BJ (cell line): ENCODE measurements at regions of chr5 and their contacts with region 1.

Region 1: DNA sequence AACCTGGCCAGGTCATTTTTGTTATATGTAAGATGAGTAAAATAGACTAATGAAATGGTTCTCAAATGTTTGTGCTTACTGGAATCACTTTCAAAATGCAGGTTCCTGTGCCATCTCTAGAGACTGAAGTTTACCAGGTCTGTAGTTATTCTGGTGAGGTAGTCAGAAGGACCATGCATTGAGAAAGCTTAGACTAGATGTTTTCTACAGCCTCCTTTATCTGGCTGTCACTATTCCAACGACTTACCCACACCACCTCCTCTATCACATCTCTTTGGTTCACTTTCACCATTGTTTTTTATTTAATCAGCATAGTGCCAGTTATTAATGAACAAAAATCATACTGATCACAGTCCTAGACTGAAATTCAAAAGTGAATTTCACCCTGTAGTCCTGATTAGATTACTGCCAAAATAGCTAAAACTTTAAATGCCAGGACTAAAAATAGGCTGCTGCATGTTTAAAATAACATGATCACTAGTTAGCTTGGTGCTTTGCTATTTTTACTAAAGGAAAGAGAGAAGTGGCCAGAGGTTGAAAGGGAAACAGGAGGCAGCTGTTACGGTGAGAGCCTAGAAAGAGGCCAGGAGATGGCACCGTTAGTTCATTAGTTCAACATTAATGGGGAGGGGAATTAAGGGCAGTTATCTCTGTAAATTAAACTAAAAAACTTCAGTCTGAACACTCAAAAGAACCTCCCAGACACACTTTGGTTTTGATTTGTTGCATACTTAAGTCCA is 13.9 kb upstream of the FNIP1 start:
- DNase-seq: no peak
- H3K4me3 ChIP-seq: no peak overlapping the region
- H3K27me3 ChIP-seq: no peaks in the 10 kb centered on the region
- CTCF ChIP-seq: 0 out of 2 replicates have a peak, but pooled peaks have one; percentile 9

Region 2: DNA sequence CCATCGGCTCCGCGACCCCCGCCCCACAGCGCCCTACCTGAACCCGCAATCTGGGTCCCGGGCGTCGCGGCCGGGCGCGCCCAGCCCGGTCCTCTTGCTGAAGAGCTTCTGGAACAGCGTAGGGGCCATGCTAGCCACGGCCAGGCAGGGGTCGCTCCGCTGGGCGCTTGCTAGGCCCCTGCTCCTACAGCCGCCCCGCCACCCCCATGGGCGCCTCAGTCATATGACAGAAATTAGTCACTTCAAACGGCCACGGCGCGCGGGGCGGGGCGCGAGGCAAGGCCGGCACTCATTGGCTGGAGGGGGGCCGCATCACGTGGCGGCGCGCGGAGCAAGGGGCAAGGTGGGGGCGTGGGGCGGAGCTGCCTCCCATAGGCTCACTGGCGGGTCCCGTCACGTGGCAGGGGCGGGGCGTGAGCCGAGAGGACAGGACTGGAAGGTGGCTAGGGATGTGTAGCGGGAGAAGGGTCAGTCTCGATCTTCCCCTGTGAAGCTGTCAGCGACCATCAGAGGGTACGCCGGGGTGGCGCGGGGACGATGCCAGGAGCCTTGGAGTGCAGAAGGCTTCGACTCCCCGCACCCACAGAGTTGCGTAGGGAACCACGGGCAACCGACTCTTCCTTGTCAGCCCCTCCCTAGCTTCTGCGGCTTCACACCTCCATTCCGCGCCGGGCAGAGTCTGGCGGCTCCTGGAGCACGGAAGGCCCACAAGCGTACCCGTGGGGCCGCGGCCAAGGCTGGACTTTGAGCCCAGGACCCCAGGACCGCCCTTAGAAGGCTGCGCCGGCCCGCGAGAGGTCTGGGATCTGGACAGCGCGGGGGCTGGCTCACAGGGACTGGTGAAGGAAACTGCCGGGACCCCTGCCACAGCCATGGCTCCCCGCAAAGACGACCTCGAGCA is 13.6 kb before region 1 on chr5 and contains the start of gene FNIP1:
- CTCF ChIA-PET with region 1: interaction called, 12 read pairs
- POLR2A ChIA-PET with region 1: no interaction called
- DNase-seq: peak; percentile 81
- H3K4me3 ChIP-seq: peak within 1 kb of the TSS; percentile 99
- H3K27me3 ChIP-seq: no peaks in the 10 kb centered on the region
- CTCF ChIP-seq: no peak
- polyA plus RNA-seq, gene FNIP1: 5.3 and 8.9 TPM in 2 replicates